Activated CD4-positive, alpha-beta memory T cell treated with anti-CD3 and anti-CD28 coated beads for 36 hours (primary cell): ENCODE measurements at regions of chr6 and their contacts with region 1.

Region 1: DNA sequence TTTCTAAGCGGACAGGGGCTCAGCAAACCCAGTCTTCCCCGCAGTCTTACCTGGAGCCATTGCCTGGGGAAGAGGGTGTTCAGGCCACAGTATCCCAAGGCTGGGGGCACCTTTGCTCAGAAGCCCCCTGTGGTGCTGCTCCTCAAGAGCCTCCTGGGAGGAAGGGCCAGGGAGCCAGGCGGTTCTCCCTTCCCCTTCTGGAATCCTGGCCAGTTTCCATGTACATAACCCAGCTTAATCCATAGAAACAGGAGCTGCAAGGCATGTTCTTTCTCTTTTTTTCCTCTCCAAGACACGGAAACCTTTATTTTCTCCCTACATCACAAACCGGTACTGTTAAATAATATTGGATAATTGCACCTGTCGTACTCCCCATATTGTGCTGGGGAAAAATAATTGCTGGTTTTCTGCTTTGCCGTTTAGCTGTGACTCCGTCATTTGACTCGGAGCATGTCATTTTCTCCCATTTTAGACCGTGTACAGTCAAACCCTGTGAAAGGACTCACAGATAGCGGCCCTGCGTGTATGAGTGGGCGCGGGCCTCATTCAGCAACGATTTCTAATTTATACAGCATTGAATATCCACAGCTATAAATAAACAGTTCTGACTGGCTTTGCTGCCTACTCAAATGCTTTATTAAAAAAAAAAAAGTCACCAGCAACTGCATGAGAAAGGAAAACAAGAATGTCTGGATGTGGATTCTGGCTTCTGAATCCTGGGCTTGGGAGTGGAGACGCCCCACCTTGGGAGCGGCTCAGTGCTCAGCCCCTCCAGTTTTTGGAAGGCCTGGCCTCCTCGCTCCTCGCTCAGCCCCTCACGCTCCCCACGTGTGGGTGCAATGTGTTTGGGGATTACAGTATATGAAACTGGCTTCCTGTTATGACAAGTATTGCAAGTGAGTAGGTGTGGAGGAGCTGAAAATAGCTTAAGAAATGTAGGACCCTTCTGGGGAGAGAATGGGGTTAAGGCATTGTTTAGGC is 67.3 kb downstream of the ADTRP start:
- DNase-seq: peak; percentile 83
- H3K4me3 Mint-ChIP-seq: peak overlapping the region; percentile 68
- H3K27ac Mint-ChIP-seq: peak overlapping the region; percentile 97
- H3K4me1 Mint-ChIP-seq: peaks cover 72% of the 10 kb centered on the region
- H3K27me3 Mint-ChIP-seq: no peaks in the 10 kb centered on the region

Region 2: GRCh38 chr6:11324453-11325015 is 386.8 kb before region 1 on chr6:
- CTCF ChIA-PET with region 1: no interaction called
- POLR2A ChIA-PET with region 1: no interaction called
- intact Hi-C with region 1: loop called (anchors 5 kb)
- DNase-seq: peak; percentile 83
- H3K4me3 Mint-ChIP-seq: peak overlapping the region; percentile 57
- H3K27ac Mint-ChIP-seq: peak overlapping the region; percentile 85
- H3K4me1 Mint-ChIP-seq: peaks cover 73% of the 10 kb centered on the region
- H3K27me3 Mint-ChIP-seq: no peaks in the 10 kb centered on the region

Region 3: GRCh38 chr6:11732036-11732631 is 20.8 kb after region 1 on chr6:
- CTCF ChIA-PET with region 1: interaction called, 10 read pairs
- POLR2A ChIA-PET with region 1: interaction called, 75 read pairs
- intact Hi-C with region 1: loop called (anchors 1 kb)
- DNase-seq: peak; percentile 85
- H3K4me3 Mint-ChIP-seq: peak overlapping the region; percentile 20
- H3K27ac Mint-ChIP-seq: peak overlapping the region; percentile 96
- H3K4me1 Mint-ChIP-seq: peaks cover 64% of the 10 kb centered on the region
- H3K27me3 Mint-ChIP-seq: no peaks in the 10 kb centered on the region

Region 4: DNA sequence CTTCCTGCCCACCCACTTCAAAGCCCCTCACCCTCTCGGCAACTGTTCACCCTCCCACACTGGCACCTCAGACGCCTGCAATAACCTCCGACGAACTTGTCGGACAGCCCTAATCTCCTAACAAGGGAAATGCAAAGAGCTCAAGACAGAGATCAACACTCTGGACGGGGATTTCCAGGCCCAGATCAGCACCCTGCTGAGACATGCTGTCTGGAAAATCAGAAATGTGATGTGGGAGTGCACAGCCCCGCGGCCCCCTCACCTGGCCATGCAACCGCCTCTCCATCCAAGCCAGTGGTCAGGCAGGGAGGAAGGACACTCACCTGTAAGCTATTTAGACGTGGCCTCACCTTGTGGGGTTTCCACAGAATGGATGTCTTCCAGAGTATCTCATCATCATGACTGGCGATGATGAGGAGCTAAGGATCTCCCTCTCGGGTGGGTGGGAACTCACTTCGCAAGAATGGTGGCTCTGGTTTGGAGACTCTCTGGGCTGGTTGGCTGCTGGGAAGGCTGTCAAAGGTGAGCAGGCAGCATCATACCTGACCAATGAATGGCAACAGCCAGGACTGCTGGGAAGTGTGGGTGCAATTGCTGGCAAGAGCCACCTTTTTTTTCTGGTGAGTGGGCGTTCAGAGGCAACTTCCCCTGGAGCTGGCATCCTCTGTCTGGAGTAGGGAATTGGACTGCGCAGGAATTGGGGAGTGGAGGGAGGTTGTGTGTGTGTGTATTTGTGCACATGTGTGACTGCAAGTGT is 95.4 kb after region 1 on chr6:
- CTCF ChIA-PET with region 1: interaction called, 3 read pairs
- POLR2A ChIA-PET with region 1: no interaction called
- intact Hi-C with region 1: loop called (anchors 5 kb)
- DNase-seq: peak; percentile 41
- H3K4me3 Mint-ChIP-seq: peak overlapping the region; percentile 15
- H3K27ac Mint-ChIP-seq: peak overlapping the region; percentile 23
- H3K4me1 Mint-ChIP-seq: peaks cover 21% of the 10 kb centered on the region
- H3K27me3 Mint-ChIP-seq: peaks cover 1% of the 10 kb centered on the region

Region 5: GRCh38 chr6:12011276-12012076 is 300.2 kb after region 1 on chr6:
- CTCF ChIA-PET with region 1: interaction called, 6 read pairs
- POLR2A ChIA-PET with region 1: interaction called, 67 read pairs
- intact Hi-C with region 1: loop called (anchors 1 kb)
- DNase-seq: peak; percentile 99
- H3K4me3 Mint-ChIP-seq: peak overlapping the region; percentile 90
- H3K27ac Mint-ChIP-seq: peak overlapping the region; percentile 99
- H3K4me1 Mint-ChIP-seq: peaks cover 46% of the 10 kb centered on the region
- H3K27me3 Mint-ChIP-seq: no peaks in the 10 kb centered on the region

Region 6: GRCh38 chr6:12233693-12234571 is 522.6 kb after region 1 on chr6:
- CTCF ChIA-PET with region 1: interaction called, 3 read pairs
- POLR2A ChIA-PET with region 1: no interaction called
- intact Hi-C with region 1: loop called (anchors 5 kb)
- DNase-seq: peak; percentile 70
- H3K4me3 Mint-ChIP-seq: no peak overlapping the region
- H3K27ac Mint-ChIP-seq: no peak overlapping the region
- H3K4me1 Mint-ChIP-seq: peaks cover 35% of the 10 kb centered on the region
- H3K27me3 Mint-ChIP-seq: no peaks in the 10 kb centered on the region